Activated CD8-positive, alpha-beta T cell treated with anti-CD3 and anti-CD28 coated beads for 36 hours (primary cell): ENCODE measurements at regions of chr11 and their contacts with region 1.

Region 1: DNA sequence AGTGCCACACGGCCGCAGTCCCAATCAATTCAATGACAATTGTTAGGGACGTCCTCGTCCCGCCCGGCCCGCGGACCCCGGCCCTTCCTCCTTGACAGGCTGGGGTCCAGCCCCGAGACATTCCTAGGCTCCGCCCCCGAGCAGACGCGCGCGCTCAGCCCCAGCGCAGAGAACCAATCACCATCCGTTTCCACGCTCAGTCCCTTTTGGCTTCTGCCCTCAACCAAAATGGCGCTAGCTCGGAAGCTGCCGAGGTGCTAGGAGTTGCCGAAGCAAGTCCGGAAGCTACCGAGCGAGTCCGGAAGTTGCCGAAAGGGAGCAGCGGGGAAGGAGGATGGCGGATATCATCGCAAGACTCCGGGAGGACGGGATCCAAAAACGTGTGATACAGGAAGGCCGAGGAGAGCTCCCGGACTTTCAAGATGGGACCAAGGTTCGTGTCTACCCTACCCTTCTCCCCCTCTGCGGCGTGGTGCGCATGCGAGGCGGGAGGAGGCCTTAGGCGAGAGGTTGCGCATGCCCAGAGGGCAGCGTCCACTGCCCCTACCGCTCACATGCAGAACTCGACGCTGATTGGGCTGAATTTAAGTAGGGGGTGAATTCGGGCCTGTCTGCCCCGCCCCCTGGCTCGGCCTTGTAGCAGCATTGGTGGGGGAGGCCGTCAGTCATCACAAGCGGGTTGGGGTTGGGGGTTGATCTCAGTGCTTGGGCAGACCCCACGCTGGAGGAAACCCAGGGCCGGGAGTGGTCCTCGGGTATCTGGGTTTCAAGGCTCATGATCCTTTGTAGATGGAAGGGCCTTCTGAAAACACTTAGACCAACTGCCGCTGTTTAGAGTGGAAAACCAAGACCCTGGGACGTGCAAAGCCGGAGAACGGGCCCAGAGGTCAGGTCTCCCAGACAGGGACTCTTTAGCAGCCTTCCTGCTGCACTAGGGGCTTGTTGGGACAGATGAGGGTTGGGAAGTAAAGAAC is at the start of gene AIP:
- DNase-seq: peak; percentile 99
- ATAC-seq: peak; percentile 68
- H3K4me3 Mint-ChIP-seq: peak within 1 kb of the TSS; percentile 79
- H3K27ac Mint-ChIP-seq: peak within 1 kb of the TSS; percentile 97
- H3K4me1 Mint-ChIP-seq: peaks cover 31% of the 10 kb centered on the region
- H3K27me3 Mint-ChIP-seq: no peaks in the 10 kb centered on the region
- CTCF ChIP-seq: no peak
- total RNA-seq, gene AIP: 145 to 146 TPM

Region 2: DNA sequence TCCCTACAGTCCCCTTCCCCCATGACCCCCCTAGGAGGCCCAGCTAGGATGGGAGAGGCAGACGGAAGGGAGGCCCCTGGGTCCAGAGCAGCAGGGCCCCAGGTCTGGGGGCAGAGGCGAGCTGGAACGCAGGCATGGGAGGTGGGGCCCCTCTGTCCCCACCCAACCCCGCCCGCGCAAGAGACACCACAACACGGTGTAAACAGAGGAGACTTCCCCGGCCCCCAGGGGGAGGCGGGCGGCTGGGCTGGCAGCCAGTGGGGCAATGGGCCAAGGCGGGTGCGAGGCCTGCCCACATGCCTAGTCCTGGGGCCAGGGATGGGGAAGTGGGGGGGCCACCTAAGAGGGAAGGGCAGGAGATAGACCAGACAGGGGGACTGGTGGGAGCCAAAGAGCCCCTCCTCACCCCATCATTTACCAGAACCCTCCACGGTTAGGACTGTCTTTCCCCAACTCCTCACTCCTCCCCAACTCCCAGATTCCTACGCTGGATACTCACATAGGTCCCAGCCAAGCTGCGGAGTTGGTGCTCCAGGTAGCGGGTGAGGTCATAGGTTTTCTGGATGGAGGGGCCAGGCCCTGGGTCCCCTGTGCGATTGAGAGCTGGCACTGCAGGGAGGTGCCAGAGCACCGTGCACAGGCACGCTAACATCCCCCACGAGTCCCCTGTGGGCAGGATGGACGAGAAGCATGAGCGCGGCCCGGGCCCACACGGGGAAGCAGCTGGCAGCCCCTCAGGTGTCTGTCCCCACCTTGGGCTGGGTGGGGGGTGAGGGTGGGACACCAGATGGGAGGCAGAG is 116.0 kb before region 1 on chr11:
- CTCF ChIA-PET with region 1: no interaction called
- POLR2A ChIA-PET with region 1: no interaction called
- intact Hi-C with region 1: no loop called
- DNase-seq: no peak
- ATAC-seq: no peak
- H3K4me3 Mint-ChIP-seq: no peak overlapping the region
- H3K27ac Mint-ChIP-seq: no peak overlapping the region
- H3K4me1 Mint-ChIP-seq: peaks cover 49% of the 10 kb centered on the region
- H3K27me3 Mint-ChIP-seq: peaks cover 13% of the 10 kb centered on the region
- CTCF ChIP-seq: no peak

Region 3: GRCh38 chr11:67468835-67469811 is 14.0 kb before region 1 on chr11 and contains the start of gene TMEM134:
- CTCF ChIA-PET with region 1: interaction called, 6 read pairs
- POLR2A ChIA-PET with region 1: interaction called, 81 read pairs
- intact Hi-C with region 1: no loop called
- DNase-seq: peak; percentile 94
- ATAC-seq: peak; percentile 86
- H3K4me3 Mint-ChIP-seq: peak within 1 kb of the TSS; percentile 95
- H3K27ac Mint-ChIP-seq: peak within 1 kb of the TSS; percentile 92
- H3K4me1 Mint-ChIP-seq: peaks cover 33% of the 10 kb centered on the region
- H3K27me3 Mint-ChIP-seq: no peaks in the 10 kb centered on the region
- CTCF ChIP-seq: peak; percentile 28
- total RNA-seq, gene TMEM134: 56.0 to 59.2 TPM

Region 4: GRCh38 chr11:67507864-67508485 is 24.9 kb after region 1 on chr11 and contains the start of gene CDK2AP2:
- CTCF ChIA-PET with region 1: interaction called, 7 read pairs
- POLR2A ChIA-PET with region 1: interaction called, 108 read pairs
- intact Hi-C with region 1: loop called (anchors 1 kb)
- DNase-seq: peak; percentile 100
- ATAC-seq: peak; percentile 78
- H3K4me3 Mint-ChIP-seq: peak within 1 kb of the TSS; percentile 89
- H3K27ac Mint-ChIP-seq: peak within 1 kb of the TSS; percentile 88
- H3K4me1 Mint-ChIP-seq: peaks cover 33% of the 10 kb centered on the region
- H3K27me3 Mint-ChIP-seq: no peaks in the 10 kb centered on the region
- CTCF ChIP-seq: no peak
- total RNA-seq, gene CDK2AP2: 53.5 to 55.5 TPM